ENCODE measurements at regions of chr2 and their contacts with region 1.

Region 1: GRCh38 chr2:65316072-65316471 is 88.4 kb downstream of the ACTR2 start:
- DNase-seq: peak; percentile 33 to 73 (median 71)
- ATAC-seq: peak; percentile 66 to 73 (median 70)
- H3K4me3 ChIP-seq: no peak overlapping the region
- H3K27ac ChIP-seq: peak overlapping the region in 6 of 12 donors; percentile 9 to 67 (median 48)
- H3K4me1 ChIP-seq: peaks cover 0 to 22% (median 9%) of the 10 kb centered on the region in 12 donors
- H3K27me3 ChIP-seq: no peaks in the 10 kb centered on the region
- CTCF ChIP-seq: no peak
- POLR2A ChIP-seq: no peak

Region 2: GRCh38 chr2:65420712-65421431 is 104.8 kb after region 1 on chr2:
- intact Hi-C with region 1: loop called in 1 of 10 experiments (anchors 10 kb)
- DNase-seq: peak in 1 of 5 donors; percentile 25
- ATAC-seq: peak in 3 of 4 donors; percentile 70 to 88 (median 72)
- H3K4me3 ChIP-seq: no peak overlapping the region
- H3K27ac ChIP-seq: peak overlapping the region in 2 of 12 donors; percentile 0 to 31
- H3K4me1 ChIP-seq: peaks cover 7 to 69% (median 40%) of the 10 kb centered on the region in 12 donors
- H3K27me3 ChIP-seq: no peaks in the 10 kb centered on the region
- CTCF ChIP-seq: no peak
- POLR2A ChIP-seq: no peak